ENCODE measurements at regions of chr9 and their contacts with region 1.

Region 1: DNA sequence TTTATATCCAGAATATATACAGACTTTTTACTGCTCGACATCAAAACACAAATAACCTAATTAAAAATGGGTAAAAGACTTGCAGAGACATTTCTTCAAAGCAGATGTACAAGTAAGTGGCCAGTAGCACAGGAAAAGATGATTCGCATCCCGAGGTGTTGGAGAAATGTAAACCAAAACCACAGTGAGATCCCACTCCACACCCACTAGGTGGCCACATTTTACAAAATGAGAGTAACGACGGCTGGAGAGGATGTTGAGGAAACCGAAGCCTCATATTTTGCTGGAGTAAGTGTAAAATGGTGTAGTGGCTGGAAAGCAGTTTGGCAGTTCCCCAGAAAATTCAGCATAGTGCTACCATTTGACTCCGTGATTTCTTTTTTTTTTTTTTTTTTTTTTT is 21.2 kb upstream of the GBGT1 start:
- DNase-seq: peak; percentile 31
- H3K4me3 ChIP-seq: no peak overlapping the region
- H3K27ac ChIP-seq: no peak overlapping the region
- H3K4me1 ChIP-seq: no peaks in the 10 kb centered on the region
- H3K27me3 ChIP-seq: no peaks in the 10 kb centered on the region
- CTCF ChIP-seq: peak; percentile 17 to 78 (median 54)
- POLR2A ChIP-seq: no peak

Region 2: GRCh38 chr9:132798817-132799790 is 385.9 kb before region 1 on chr9:
- intact Hi-C with region 1: no loop called
- DNase-seq: peak; percentile 12
- H3K4me3 ChIP-seq: no peak overlapping the region
- H3K27ac ChIP-seq: peak overlapping the region; percentile 11 to 40
- H3K4me1 ChIP-seq: peaks cover 6% of the 10 kb centered on the region
- H3K27me3 ChIP-seq: no peaks in the 10 kb centered on the region
- CTCF ChIP-seq: peak in 2 of 4 experiments; percentile 10 to 22
- POLR2A ChIP-seq: no peak

Region 3: DNA sequence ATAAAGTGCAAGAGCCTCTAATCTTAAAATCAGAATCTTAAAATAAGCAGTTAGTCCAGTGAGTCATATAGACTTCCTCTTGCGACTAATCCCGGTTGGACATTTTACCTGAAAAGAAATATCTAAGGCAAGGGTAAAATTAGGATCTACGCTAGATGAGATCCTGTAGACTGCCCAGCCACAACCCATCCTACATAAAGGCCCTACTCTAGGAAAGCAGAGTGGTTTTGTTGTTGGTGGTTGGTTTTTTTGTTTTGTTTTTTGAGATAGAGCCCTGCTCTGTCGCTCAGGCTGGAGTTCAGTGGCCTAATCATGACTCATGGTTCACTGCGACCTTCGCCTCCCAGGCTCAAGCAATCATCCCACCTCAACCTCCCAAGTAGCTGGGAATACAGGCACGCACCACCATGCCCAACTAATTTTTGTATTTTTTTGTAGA is 247.5 kb before region 1 on chr9:
- intact Hi-C with region 1: no loop called
- DNase-seq: no peak
- H3K4me3 ChIP-seq: no peak overlapping the region
- H3K27ac ChIP-seq: no peak overlapping the region
- H3K4me1 ChIP-seq: no peaks in the 10 kb centered on the region
- H3K27me3 ChIP-seq: no peaks in the 10 kb centered on the region
- CTCF ChIP-seq: no peak
- POLR2A ChIP-seq: no peak

Region 4: GRCh38 chr9:133327834-133328484 is 143.0 kb after region 1 on chr9:
- intact Hi-C with region 1: loop called (anchors 5 kb)
- DNase-seq: no peak
- H3K4me3 ChIP-seq: no peak overlapping the region
- H3K27ac ChIP-seq: no peak overlapping the region
- H3K4me1 ChIP-seq: no peaks in the 10 kb centered on the region
- H3K27me3 ChIP-seq: no peaks in the 10 kb centered on the region
- CTCF ChIP-seq: no peak
- POLR2A ChIP-seq: no peak

Region 5: DNA sequence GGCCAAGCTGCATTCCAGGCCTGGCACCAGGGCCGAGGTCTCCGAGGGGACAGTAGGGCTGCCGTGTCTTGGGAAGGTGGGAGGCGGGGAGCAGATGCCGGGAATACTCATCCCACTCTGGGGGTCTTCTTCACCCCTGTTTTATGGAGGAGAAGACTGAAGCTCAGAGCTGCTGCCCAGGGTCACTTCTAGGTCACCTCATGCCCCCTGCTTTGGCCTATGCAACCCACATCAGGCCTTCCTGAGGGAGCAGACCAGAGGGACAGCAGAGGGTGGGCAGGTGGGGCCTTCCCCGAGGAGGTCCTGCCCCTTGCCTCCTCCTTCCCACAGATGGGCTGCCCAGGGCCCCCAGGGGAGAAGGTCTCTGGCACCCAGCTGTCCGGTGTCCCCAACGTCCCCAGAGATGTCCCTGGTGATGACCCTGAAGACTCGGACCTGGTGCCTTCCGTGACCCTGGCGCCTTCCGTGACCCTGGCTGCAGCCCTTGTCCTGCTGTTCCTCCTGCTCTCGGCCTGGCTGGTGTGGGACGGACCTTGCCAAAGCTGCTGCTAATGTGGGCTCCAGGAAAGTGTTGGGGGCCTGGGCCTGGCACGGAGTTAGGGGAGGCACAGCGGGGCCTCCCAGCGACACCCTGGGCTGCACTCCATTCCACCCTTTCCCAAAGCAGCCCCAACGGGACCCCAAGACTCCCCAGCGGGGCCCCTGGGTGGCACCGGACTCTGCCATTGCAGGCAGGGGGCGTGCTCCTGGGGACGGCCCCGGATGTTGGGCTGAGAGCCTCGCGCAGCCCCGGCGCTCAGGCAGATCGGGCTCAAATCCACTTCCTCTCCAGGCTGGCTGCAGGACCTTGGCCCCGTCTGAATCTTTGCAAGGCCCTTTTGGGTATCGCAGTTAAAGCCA is 300.6 kb after region 1 on chr9:
- intact Hi-C with region 1: loop called (anchors 5 kb)
- DNase-seq: no peak
- H3K4me3 ChIP-seq: no peak overlapping the region
- H3K27ac ChIP-seq: no peak overlapping the region
- H3K4me1 ChIP-seq: peaks cover 6% of the 10 kb centered on the region
- H3K27me3 ChIP-seq: no peaks in the 10 kb centered on the region
- CTCF ChIP-seq: no peak
- POLR2A ChIP-seq: no peak

Measured in prostate gland (tissue), 2 donors.